Activated naive CD4-positive, alpha-beta T cell treated with anti-CD3 and anti-CD28 coated beads for 36 hours (primary cell): ENCODE measurements at regions of chr11 and their contacts with region 1.

Region 1: DNA sequence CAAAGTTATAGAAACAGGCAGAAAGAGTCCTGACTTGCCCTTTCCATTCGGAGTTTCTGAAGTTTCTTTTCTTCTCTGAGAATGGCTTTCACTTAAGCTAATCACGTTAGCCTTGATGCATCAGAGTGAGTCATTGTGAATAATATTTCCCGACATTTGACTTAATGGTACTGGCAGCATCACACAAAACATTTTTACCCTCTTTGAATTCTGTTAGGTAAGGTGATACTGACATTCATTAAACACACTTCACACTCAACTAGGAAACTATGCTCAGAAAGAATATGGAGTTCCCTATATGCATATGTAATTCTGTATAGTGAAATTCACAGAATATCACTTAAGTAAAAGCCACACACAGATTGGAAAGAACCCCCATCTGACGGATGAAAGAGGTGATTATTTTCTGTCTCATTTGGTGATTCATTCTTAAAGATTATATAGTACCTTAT is 120.8 kb upstream of the ARHGAP20 start:
- DNase-seq: no peak
- H3K4me3 Mint-ChIP-seq: no peak overlapping the region
- H3K27ac Mint-ChIP-seq: peak overlapping the region; percentile 84
- H3K4me1 Mint-ChIP-seq: peaks cover 31% of the 10 kb centered on the region
- H3K27me3 Mint-ChIP-seq: no peaks in the 10 kb centered on the region

Region 2: GRCh38 chr11:110327508-110327907 is 505.6 kb before region 1 on chr11:
- CTCF ChIA-PET with region 1: no interaction called
- intact Hi-C with region 1: loop called (anchors 5 kb)
- DNase-seq: no peak
- H3K4me3 Mint-ChIP-seq: peak overlapping the region; percentile 81
- H3K27ac Mint-ChIP-seq: peak overlapping the region; percentile 65
- H3K4me1 Mint-ChIP-seq: peaks cover 18% of the 10 kb centered on the region
- H3K27me3 Mint-ChIP-seq: peaks cover under 1% of the 10 kb centered on the region

Region 3: DNA sequence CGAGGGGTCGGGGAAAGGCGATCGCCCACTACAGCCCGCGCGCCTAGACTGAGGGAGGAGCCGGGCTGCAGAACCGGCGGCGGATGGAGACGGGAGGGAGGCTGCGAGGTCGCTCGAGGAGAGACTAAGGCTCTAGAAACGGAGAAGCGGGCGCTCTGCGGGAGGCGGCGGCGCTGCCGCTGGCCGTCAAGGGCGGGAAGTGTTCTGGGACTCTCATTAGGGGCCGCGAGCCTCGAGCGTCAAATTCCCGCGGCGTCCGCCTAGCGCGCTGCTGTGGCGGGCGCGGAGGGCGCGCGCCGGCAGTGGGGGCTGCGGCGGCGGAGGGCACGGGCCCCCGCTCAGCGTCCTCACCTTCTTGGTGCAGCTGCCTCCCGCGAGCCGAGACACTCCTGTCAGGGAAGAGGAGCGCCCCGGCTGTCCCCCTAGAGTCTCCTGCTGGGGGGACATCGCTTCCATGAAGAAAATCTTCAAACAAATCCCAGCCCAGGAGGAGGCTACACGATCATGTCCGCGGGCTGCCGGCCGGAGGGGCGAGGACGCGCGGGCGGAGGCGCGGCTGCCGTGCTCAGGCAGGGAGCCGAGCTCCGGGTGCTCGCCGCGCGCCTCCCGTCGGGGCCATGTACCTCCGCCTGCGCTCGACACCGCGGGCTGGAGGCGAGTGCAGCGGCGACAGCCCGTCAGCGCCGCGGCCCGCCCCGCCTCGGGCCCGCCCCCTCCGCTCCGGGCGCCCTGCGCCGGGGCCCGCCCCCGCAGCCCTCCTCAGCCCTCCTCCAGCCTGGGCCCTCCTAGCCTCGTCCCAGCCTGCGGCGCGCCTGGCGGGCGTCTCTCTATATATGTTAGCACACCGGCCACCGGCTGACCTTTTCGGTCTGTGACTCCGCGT is 121.0 kb before region 1 on chr11 and contains the start of gene ARHGAP20:
- CTCF ChIA-PET with region 1: no interaction called
- intact Hi-C with region 1: loop called (anchors 2 kb)
- DNase-seq: peak; percentile 59
- H3K4me3 Mint-ChIP-seq: peak within 1 kb of the TSS; percentile 70
- H3K27ac Mint-ChIP-seq: no peak within 1 kb of the TSS
- H3K4me1 Mint-ChIP-seq: peaks cover 14% of the 10 kb centered on the region
- H3K27me3 Mint-ChIP-seq: peaks cover 48% of the 10 kb centered on the region
- total RNA-seq, gene ARHGAP20: 0.19 to 0.22 TPM

Region 4: DNA sequence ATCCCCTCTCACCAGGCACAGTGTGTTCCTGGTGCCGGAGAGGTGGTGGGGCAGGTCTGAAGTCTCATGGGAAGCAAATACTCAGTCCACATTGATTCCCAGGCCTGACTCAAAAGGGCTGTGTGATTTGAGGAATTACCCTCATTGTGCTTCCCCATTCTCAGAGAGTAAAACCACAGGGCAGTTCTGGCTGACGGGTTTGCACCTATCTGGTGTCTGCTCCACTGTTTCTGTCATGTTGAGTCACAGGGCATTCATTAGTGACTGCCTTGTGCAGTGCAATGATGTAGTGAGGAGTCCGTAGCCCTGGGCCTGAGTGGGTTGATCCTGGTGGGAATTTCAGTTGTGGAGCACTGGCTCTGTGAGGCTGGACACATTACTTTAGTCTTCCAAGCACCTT is 35.6 kb before region 1 on chr11:
- CTCF ChIA-PET with region 1: no interaction called
- intact Hi-C with region 1: loop called (anchors 1 kb)
- DNase-seq: peak; percentile 22
- H3K4me3 Mint-ChIP-seq: no peak overlapping the region
- H3K27ac Mint-ChIP-seq: no peak overlapping the region
- H3K4me1 Mint-ChIP-seq: peaks cover 12% of the 10 kb centered on the region
- H3K27me3 Mint-ChIP-seq: peaks cover 3% of the 10 kb centered on the region

Region 5: DNA sequence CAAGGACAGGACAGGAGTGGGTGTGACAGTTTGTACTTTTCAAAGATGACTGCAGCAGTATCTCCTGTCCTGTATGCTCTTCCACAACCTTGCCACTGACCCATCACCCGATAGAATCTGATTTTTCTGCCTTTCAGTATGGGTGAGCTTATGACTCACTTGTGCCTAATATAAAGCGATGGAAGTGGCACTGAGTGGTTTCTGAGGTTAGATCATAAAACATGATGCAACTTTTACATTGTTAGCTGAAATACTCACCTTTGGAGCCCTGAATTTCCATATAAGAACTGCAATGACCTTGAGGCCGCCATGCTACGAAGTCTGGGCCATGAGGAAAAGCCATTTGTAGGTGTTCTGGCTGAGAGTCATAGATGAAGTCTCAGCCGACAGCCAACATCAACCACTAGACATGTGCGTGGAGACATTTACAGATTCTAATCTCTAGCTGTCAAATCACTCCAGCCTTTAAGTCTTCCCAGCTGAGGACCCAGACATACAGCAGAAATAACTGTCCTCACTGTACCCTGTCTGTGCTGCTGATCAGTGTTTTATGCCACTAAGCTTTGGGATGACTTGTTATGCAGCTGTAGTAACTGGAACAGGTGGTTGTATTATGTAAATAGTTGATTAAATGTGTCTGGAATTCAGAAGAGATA is 14.9 kb before region 1 on chr11:
- CTCF ChIA-PET with region 1: interaction called, 5 read pairs
- intact Hi-C with region 1: loop called (anchors 1 kb)
- DNase-seq: peak; percentile 57
- H3K4me3 Mint-ChIP-seq: no peak overlapping the region
- H3K27ac Mint-ChIP-seq: peak overlapping the region; percentile 60
- H3K4me1 Mint-ChIP-seq: peaks cover 12% of the 10 kb centered on the region
- H3K27me3 Mint-ChIP-seq: peaks cover 8% of the 10 kb centered on the region

Region 6: DNA sequence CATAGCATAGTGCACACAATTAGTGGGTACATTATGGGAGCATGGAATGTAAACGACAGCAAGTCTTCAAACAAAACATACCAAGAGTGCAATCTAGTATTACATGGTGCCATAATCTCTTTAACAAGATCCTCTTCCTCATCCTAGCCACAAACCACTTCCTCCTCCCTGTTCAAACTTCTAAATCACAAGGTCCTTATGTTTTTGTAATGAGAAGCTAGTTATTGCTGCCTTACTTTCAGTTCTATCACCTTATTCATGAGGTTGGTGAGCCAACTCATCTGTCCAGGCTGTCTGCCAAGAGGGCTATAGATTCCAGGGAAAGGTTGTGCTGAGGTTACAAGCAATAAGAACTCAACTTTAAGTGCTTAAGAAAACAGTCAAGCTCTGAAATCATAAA is 74.6 kb after region 1 on chr11:
- CTCF ChIA-PET with region 1: no interaction called
- intact Hi-C with region 1: loop called (anchors 1 kb)
- DNase-seq: peak; percentile 32
- H3K4me3 Mint-ChIP-seq: no peak overlapping the region
- H3K27ac Mint-ChIP-seq: peak overlapping the region; percentile 48
- H3K4me1 Mint-ChIP-seq: peaks cover 29% of the 10 kb centered on the region
- H3K27me3 Mint-ChIP-seq: no peaks in the 10 kb centered on the region

Region 7: GRCh38 chr11:111531687-111532364 is 698.8 kb after region 1 on chr11:
- CTCF ChIA-PET with region 1: no interaction called
- intact Hi-C with region 1: loop called (anchors 5 kb)
- DNase-seq: peak; percentile 88
- H3K4me3 Mint-ChIP-seq: no peak overlapping the region
- H3K27ac Mint-ChIP-seq: peak overlapping the region; percentile 82
- H3K4me1 Mint-ChIP-seq: peaks cover 47% of the 10 kb centered on the region
- H3K27me3 Mint-ChIP-seq: peaks cover 16% of the 10 kb centered on the region